ENCODE measurements at regions of chr14 and their contacts with region 1.

Region 1: GRCh38 chr14:53306267-53306721 is 153.2 kb upstream of the DDHD1 start:
- DNase-seq: peak; percentile 69
- ATAC-seq: peak; percentile 78
- H3K4me3 ChIP-seq: peak overlapping the region; percentile 56
- H3K27ac ChIP-seq: peak overlapping the region; percentile 38; the same call in 1 of the 2 replicates
- H3K4me1 ChIP-seq: peaks cover 10% of the 10 kb centered on the region
- H3K27me3 ChIP-seq: no peaks in the 10 kb centered on the region; the same call in 1 of the 2 replicates
- CTCF ChIP-seq: peak; percentile 80
- POLR2A ChIP-seq: no peak
- RAD21 ChIP-seq: peak; percentile 79

Region 2: DNA sequence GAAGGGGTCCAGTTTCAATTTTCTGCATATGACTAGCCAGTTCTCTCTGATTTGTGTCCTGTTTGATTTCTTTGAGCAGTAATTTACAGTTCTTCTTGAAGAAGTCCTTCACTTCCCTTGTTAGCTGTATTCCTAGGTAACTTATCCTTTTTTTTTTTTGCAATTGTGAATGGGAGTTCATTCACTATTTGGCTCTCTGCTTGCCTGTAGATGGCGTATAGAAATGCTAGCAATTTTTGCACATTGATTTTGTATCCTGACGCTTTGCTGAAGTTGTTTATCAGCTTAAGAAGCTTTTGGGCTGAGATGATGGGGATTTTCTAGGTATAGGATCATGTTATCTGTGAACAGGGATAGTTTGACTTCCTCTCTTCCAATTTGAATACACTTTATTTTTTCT is 1159.8 kb before region 1 on chr14:
- CTCF ChIA-PET with region 1: no interaction called
- POLR2A ChIA-PET with region 1: no interaction called
- dilution Hi-C with region 1: no loop called
- in situ Hi-C with region 1: no loop called
- intact Hi-C with region 1: loop called (anchors 2 kb)
- DNase-seq: no peak
- ATAC-seq: no peak
- H3K4me3 ChIP-seq: no peak overlapping the region
- H3K27ac ChIP-seq: no peak overlapping the region
- H3K4me1 ChIP-seq: no peaks in the 10 kb centered on the region
- H3K27me3 ChIP-seq: peaks cover 22% of the 10 kb centered on the region
- CTCF ChIP-seq: peak; percentile 29; the same call in 1 of the 2 replicates
- POLR2A ChIP-seq: no peak
- RAD21 ChIP-seq: no peak

Region 3: DNA sequence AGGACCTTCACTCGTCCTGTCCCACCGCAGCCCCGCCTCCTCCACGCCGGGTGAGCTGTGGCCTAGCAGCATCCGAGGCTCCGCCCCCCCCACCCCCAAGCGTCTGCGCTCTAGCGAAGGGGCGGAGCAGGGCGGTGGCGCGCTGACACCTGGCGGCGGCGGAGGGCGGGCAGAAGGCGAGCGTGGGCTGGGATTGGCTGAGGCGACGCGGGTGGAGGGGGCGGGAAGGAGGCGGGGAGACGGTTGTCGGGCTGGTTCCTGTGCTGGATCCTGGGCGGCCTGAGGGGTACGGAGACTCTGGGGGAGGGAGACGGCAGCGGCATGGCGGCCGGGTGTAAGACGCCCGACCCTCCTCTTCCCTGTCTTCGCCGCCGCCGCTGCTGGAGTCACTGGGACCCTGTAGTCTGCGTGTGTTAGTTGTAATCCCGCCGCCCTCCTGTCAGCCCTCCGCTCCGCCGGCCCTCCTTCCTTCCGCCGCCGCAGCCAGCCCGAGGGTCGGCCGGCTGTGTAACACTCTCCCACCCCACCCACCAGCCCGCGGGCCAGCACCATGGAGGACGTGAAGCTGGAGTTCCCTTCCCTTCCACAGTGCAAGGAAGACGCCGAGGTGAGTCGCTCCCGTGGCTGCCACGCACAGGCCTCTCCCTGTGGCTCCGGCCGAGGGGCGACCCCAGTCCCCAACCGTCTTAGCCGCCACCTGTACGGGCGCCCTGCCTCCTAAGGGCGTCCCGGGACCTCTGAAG is 576.2 kb before region 1 on chr14 and contains the start of gene STYX:
- CTCF ChIA-PET with region 1: no interaction called
- POLR2A ChIA-PET with region 1: no interaction called
- dilution Hi-C with region 1: no loop called
- in situ Hi-C with region 1: no loop called
- intact Hi-C with region 1: loop called (anchors 5 kb)
- DNase-seq: peak; percentile 96
- ATAC-seq: peak; percentile 99
- H3K4me3 ChIP-seq: peak within 1 kb of the TSS; percentile 84
- H3K27ac ChIP-seq: peak within 1 kb of the TSS; percentile 65
- H3K4me1 ChIP-seq: no peaks in the 10 kb centered on the region
- H3K27me3 ChIP-seq: no peaks in the 10 kb centered on the region
- CTCF ChIP-seq: no peak
- POLR2A ChIP-seq: peak; percentile 87
- RAD21 ChIP-seq: no peak
- total RNA-seq, gene STYX: 7.5 and 20.0 TPM in 2 replicates

Region 4: DNA sequence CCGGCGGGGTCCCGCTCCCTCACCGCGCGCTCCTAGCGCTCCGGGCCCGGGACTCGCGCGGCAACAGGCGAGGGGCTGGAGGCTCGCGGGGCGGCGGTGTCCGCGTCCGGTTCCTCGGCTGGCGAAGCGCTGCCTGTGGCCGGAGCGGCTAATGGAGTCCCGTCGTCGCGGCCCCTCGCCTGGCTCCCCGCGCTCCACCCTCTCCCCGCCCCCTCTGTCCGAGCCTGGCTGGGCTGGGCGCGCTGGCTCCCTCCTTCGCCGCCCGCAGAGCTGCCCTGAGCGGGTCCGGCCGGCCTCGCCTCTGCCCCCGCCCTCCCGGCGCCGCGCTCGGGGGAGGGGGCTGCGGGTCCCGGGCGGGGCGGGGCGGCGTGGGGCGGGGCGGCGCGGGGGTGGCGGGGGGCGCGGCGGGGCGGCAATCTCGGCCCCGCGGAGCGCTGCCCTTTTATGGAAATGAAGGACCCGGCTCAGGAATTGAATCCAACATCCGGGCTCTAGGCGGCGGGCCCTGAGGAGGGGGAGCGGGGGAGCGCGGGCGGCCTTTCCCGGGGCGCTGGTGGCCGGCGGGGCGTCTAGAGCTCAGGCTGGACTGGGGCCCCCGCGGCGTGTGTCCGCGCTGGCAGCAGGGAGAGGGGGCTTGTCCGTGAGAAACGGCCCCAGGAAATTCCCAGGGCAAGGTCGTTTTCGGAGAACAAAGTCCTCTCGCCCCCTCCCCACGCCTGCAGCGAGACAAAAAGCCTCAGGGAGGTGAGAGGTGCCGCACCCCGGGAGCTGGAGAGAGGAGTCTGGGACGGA is 355.2 kb before region 1 on chr14 and contains the start of gene FERMT2:
- CTCF ChIA-PET with region 1: no interaction called
- POLR2A ChIA-PET with region 1: no interaction called
- dilution Hi-C with region 1: no loop called
- in situ Hi-C with region 1: loop called (anchors 25 kb)
- intact Hi-C with region 1: loop called (anchors 5 kb)
- DNase-seq: peak; percentile 82
- ATAC-seq: peak; percentile 94
- H3K4me3 ChIP-seq: peak within 1 kb of the TSS; percentile 99
- H3K27ac ChIP-seq: peak within 1 kb of the TSS; percentile 99
- H3K4me1 ChIP-seq: peaks cover 7% of the 10 kb centered on the region; the same call in 1 of the 2 replicates
- H3K27me3 ChIP-seq: no peaks in the 10 kb centered on the region
- CTCF ChIP-seq: no peak
- POLR2A ChIP-seq: peak; percentile 81
- RAD21 ChIP-seq: no peak
- total RNA-seq, gene FERMT2: 217 and 229 TPM in 2 replicates

Region 5: GRCh38 chr14:53295985-53296582 is 10.2 kb before region 1 on chr14:
- CTCF ChIA-PET with region 1: interaction called, 17 read pairs
- POLR2A ChIA-PET with region 1: no interaction called
- dilution Hi-C with region 1: no loop called
- in situ Hi-C with region 1: no loop called
- intact Hi-C with region 1: no loop called
- DNase-seq: peak; percentile 45
- ATAC-seq: no peak
- H3K4me3 ChIP-seq: no peak overlapping the region
- H3K27ac ChIP-seq: no peak overlapping the region
- H3K4me1 ChIP-seq: no peaks in the 10 kb centered on the region
- H3K27me3 ChIP-seq: no peaks in the 10 kb centered on the region
- CTCF ChIP-seq: peak; percentile 55
- POLR2A ChIP-seq: no peak
- RAD21 ChIP-seq: peak; percentile 46

Region 6: GRCh38 chr14:53458368-53458814 is 152.1 kb after region 1 on chr14:
- CTCF ChIA-PET with region 1: no interaction called
- POLR2A ChIA-PET with region 1: no interaction called
- dilution Hi-C with region 1: no loop called
- in situ Hi-C with region 1: no loop called
- intact Hi-C with region 1: no loop called
- DNase-seq: peak; percentile 77
- ATAC-seq: peak; percentile 83
- H3K4me3 ChIP-seq: no peak overlapping the region
- H3K27ac ChIP-seq: peak overlapping the region; percentile 63
- H3K4me1 ChIP-seq: peaks cover 17% of the 10 kb centered on the region
- H3K27me3 ChIP-seq: no peaks in the 10 kb centered on the region
- CTCF ChIP-seq: no peak
- POLR2A ChIP-seq: no peak
- RAD21 ChIP-seq: no peak